Heart left ventricle (tissue), 16 donors: ENCODE measurements at regions of chr14 and their contacts with region 1.

Region 1: DNA sequence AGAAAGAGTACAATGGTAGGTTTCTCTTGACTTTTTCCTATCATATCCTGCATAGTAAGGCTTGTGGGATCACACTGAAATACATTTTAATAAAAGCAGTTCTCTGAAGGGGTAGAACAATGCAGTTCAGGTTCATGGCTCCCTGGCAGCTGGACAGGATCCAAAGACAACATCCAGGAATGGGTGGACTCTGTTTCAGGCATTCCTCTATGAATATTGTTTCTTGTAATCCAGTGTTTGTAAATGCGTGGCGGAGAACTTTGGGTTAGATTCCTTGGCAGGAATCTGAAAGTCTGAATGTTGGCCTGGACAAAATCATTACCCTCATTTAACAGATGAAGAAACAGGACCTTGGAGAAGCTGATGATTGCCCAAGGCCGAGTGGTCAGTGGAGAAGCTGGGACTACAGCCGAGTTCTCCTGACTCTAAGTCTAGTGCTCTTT is 43.5 kb downstream of the SYNE2 start:
- DNase-seq: peak in 4 of 5 donors; percentile 60 to 82 (median 73)
- ATAC-seq: peak; percentile 51 to 87 (median 70)
- H3K4me3 ChIP-seq: no peak overlapping the region
- H3K27ac ChIP-seq: peak overlapping the region; percentile 35 to 76 (median 70)
- H3K4me1 ChIP-seq: peaks cover 12 to 96% (median 66%) of the 10 kb centered on the region in 12 donors
- H3K27me3 ChIP-seq: peaks cover 0 to 33% (median 0%) of the 10 kb centered on the region in 9 donors
- CTCF ChIP-seq: no peak
- POLR2A ChIP-seq: no peak

Region 2: DNA sequence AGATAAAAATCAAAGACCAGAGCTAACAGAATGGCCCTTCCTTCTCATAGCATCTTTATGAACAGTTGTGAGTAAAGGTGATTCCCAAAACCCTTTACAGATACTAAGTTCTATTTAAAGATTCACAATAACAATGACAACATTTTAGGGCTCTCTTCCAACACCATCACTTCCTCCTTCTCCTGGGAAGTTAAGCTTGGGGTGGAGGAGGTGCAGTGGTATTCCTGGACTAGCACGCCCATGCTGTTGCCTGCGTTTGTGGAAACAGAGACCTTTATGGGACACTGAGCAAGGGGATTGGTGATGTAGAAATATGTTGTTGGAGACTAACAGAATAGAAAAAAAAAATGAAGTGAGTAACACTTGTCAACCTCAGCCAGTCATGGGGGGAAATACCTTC is 21.0 kb before region 1 on chr14:
- intact Hi-C with region 1: loop called in 1 of 10 experiments (anchors 2 kb)
- DNase-seq: peak in 4 of 5 donors; percentile 47 to 77 (median 65)
- ATAC-seq: peak; percentile 70 to 95 (median 88)
- H3K4me3 ChIP-seq: no peak overlapping the region
- H3K27ac ChIP-seq: peak overlapping the region; percentile 58 to 82 (median 73)
- H3K4me1 ChIP-seq: peaks cover 0 to 65% (median 45%) of the 10 kb centered on the region in 12 donors
- H3K27me3 ChIP-seq: no peaks in the 10 kb centered on the region
- CTCF ChIP-seq: no peak
- POLR2A ChIP-seq: no peak

Region 3: GRCh38 chr14:63928744-63929174 is 32.5 kb after region 1 on chr14:
- intact Hi-C with region 1: loop called in 1 of 10 experiments (anchors 1 kb)
- DNase-seq: no peak
- ATAC-seq: peak in 3 of 4 donors; percentile 34 to 70 (median 38)
- H3K4me3 ChIP-seq: no peak overlapping the region
- H3K27ac ChIP-seq: peak overlapping the region in 7 of 12 donors; percentile 2 to 60 (median 21)
- H3K4me1 ChIP-seq: peaks cover 0 to 21% (median 12%) of the 10 kb centered on the region in 12 donors
- H3K27me3 ChIP-seq: no peaks in the 10 kb centered on the region
- CTCF ChIP-seq: no peak
- POLR2A ChIP-seq: no peak